ENCODE measurements at regions of chr3 and their contacts with region 1.

Region 1: DNA sequence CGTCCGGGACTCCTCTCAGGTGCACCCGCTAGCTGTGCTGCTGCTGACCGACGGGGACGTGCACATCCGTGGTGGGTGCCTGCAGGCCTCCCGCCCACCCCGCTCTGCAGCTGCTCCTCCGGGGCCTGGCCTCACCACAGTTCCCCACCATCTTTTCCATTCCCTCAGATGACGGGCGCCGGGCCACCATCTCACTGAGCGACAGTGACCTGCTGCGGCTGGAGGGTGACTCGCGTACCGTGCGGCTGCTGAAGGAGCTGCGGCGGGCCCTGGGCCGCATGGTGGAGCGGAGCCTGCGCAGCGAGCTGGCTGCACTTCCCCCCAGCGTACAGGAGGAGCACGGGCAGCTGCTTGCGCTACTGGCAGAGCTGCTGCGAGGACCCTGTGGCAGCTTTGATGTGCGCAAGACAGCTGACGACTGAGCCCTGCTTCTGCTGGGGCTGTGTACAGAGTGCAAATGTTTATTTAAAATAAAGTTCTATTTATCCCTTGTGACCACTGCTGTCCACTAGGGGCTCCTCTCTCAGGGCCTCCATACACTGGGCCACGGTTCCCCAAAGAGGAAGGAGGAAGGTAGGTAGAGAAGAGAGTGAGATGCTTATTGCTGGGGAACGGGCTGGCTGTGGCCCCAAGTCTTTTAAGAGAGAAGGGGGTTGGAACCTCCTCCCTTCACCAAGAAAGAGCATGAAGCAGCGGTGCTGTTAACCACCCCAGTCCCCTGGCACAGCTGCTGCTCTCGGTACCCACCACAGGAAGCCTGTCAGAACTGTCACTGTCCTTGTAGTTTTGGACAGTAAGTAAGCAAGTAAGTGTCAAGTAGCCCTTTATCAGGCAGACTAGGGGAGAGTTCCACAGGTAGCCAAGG is 47.0 kb downstream of the DHX30 start:
- DNase-seq: no peak
- ATAC-seq: peak; percentile 62
- H3K4me3 ChIP-seq: no peak overlapping the region
- H3K27ac ChIP-seq: no peak overlapping the region
- H3K4me1 ChIP-seq: no peaks in the 10 kb centered on the region
- H3K27me3 ChIP-seq: no peaks in the 10 kb centered on the region
- CTCF ChIP-seq: no peak; the same call in 1 of the 2 replicates

Region 2: DNA sequence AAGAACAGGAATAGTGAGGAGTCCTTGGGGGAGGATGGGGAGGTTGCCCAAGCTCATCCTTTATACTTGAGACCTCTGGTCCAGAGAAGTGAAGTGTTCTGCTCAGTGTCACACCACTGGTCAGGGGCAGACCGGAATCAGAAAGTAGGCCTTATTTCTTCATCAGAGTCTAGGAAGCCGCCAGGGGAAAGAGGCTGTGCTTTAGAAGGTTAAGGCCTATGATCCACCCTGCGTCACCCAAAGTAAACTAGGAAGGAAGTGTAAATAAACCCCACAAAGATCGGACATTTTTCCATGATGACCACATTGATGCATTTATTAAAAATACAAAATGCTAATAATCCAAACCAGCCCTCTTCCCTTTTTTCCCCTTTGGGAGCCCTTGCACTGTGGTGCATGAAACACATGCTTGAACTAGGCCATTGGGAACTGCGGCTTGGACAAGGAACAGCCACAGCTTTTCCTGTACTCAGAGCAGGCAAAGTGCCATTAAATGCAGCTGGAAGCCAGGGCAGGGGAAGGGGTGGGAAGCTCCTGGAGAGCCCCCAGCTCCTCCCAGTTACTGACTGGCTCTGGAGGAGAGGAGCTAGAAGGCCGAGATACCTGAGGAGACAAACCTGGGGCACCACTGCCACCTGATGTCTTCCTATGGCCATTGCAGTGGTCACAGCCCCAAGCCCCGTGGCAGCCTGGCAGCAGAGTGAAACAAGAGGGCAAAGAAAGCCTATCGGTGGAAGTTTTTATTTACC is 301.3 kb after region 1 on chr3:
- CTCF ChIA-PET with region 1: no interaction called
- POLR2A ChIA-PET with region 1: no interaction called
- in situ Hi-C with region 1: no loop called
- intact Hi-C with region 1: loop called (anchors 10 kb)
- DNase-seq: peak; percentile 50
- ATAC-seq: peak; percentile 96
- H3K4me3 ChIP-seq: no peak overlapping the region
- H3K27ac ChIP-seq: no peak overlapping the region
- H3K4me1 ChIP-seq: no peaks in the 10 kb centered on the region; the same call in 1 of the 2 replicates
- H3K27me3 ChIP-seq: no peaks in the 10 kb centered on the region
- CTCF ChIP-seq: peak; percentile 86